Naive thymus-derived CD4-positive, alpha-beta T cell (primary cell): ENCODE measurements at regions of chr1 and their contacts with region 1.

Region 1: DNA sequence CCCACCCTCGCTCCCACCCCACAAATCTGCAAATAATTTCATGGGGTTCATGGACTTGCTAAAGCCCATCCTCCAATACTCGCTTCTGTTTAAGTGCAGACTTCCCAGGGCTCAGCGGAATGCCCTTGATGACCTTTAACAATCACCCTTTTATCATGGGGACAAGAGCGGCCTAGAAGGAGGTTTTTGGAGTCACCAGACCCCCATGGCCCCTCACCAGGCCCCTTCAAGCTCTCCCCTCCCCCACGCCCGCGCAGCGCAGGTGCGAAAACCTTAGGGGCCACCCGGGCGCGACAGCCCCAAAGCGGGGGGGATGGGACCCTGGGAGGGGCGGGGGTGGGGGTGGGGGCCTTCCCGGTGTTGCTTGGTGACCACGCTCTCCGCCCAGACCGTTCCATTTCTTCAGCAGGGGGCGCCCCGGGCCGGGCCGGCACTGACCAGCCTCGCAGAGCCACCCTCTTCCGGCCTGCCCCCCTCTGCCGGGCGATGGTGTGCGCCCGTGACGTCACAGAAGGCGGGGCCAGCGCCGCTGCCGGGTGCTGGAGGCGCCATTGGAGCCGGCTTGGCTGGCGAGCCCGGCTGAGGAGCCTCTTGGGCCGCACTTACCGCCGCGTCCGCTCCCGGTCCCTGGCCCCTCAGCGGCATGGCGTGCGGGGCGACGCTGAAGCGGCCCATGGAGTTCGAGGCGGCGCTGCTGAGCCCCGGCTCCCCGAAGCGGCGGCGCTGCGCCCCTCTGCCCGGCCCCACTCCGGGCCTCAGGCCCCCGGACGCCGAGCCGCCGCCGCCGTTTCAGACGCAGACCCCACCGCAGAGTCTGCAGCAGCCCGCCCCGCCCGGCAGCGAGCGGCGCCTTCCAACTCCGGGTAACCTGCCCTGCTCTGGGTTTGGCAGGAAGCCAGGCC is at the start of gene AKIRIN1:
- DNase-seq: peak; percentile 82 to 100 (median 89)
- ATAC-seq: peak; percentile 98
- H3K4me3 ChIP-seq: peak within 1 kb of the TSS; percentile 82
- H3K4me3 Mint-ChIP-seq: peak within 1 kb of the TSS; percentile 80 to 95 (median 90)
- H3K27ac ChIP-seq: peak within 1 kb of the TSS; percentile 99
- H3K27ac Mint-ChIP-seq: peak within 1 kb of the TSS; percentile 84 to 95 (median 91)
- H3K4me1 ChIP-seq: peaks cover 14 to 32% of the 10 kb centered on the region in 2 donors
- H3K4me1 Mint-ChIP-seq: peaks cover 24 to 52% (median 42%) of the 10 kb centered on the region in 7 donors
- H3K27me3 ChIP-seq: no peaks in the 10 kb centered on the region
- H3K27me3 Mint-ChIP-seq: peaks cover 0 to 4% (median 0%) of the 10 kb centered on the region in 5 donors
- total RNA-seq, gene AKIRIN1: 63.7 to 74.7 (median 70.2) TPM

Region 2: GRCh38 chr1:38919130-38919529 is 71.9 kb before region 1 on chr1:
- CTCF ChIA-PET with region 1: no interaction called
- POLR2A ChIA-PET with region 1: no interaction called
- intact Hi-C with region 1: no loop called
- DNase-seq: no peak
- ATAC-seq: no peak
- H3K4me3 ChIP-seq: no peak overlapping the region
- H3K4me3 Mint-ChIP-seq: no peak overlapping the region
- H3K27ac ChIP-seq: no peak overlapping the region
- H3K27ac Mint-ChIP-seq: no peak overlapping the region
- H3K4me1 ChIP-seq: no peaks in the 10 kb centered on the region
- H3K4me1 Mint-ChIP-seq: peaks cover 0 to 3% (median 0%) of the 10 kb centered on the region in 7 donors
- H3K27me3 ChIP-seq: no peaks in the 10 kb centered on the region
- H3K27me3 Mint-ChIP-seq: no peaks in the 10 kb centered on the region

Region 3: DNA sequence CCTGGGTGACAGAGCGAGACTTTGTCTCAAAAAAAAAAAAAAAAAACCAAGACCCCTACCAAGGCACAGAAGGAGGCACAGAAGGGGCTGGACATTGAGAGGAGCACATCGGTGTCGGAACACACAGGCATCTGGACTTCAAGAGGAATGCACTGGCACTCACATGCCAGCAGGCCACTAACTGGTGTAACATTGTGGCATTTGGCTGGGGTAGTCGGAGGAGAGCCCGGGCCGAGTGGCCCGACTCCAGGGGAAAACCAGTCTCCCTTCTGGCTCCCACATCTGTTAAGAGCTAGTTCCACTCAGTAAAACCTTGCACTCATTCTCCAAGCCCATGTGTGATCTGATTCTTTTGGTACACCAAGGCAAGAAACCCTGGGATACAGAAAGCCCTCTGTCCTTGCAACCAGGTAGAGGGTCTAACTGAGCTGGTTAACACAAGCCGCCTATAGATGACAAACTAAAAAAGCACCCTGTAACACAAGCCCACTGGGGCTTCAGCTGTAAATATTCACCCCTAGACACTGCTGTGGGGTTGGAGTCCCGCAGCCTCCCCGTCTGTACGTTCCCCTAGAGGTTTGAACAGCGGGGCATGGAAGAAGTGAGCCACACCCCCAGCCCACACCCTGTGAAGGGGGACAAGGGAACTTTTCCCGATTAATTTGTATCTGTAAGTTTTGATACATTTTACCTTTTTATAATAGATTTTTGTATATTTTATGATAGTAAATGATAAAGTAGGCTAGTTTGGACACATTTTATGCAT is 17.1 kb before region 1 on chr1:
- CTCF ChIA-PET with region 1: interaction called, 3 read pairs
- POLR2A ChIA-PET with region 1: interaction called, 25 read pairs
- intact Hi-C with region 1: loop called (anchors 1 kb)
- DNase-seq: no peak
- ATAC-seq: no peak
- H3K4me3 ChIP-seq: no peak overlapping the region
- H3K4me3 Mint-ChIP-seq: no peak overlapping the region
- H3K27ac ChIP-seq: no peak overlapping the region
- H3K27ac Mint-ChIP-seq: peak overlapping the region in 1 of 9 donors; percentile 38
- H3K4me1 ChIP-seq: peaks cover 0 to 14% of the 10 kb centered on the region in 2 donors
- H3K4me1 Mint-ChIP-seq: peaks cover 2 to 25% (median 15%) of the 10 kb centered on the region in 7 donors
- H3K27me3 ChIP-seq: no peaks in the 10 kb centered on the region
- H3K27me3 Mint-ChIP-seq: peaks cover 0 to 2% (median 0%) of the 10 kb centered on the region in 5 donors

Region 4: GRCh38 chr1:39003794-39004193 is 12.8 kb after region 1 on chr1:
- CTCF ChIA-PET with region 1: no interaction called
- POLR2A ChIA-PET with region 1: interaction called, 3 read pairs
- intact Hi-C with region 1: loop called in 1 of 2 experiments (anchors 2 kb)
- DNase-seq: no peak
- ATAC-seq: no peak
- H3K4me3 ChIP-seq: no peak overlapping the region
- H3K4me3 Mint-ChIP-seq: no peak overlapping the region
- H3K27ac ChIP-seq: no peak overlapping the region
- H3K27ac Mint-ChIP-seq: peak overlapping the region in 3 of 9 donors; percentile 63 to 80 (median 74)
- H3K4me1 ChIP-seq: no peaks in the 10 kb centered on the region
- H3K4me1 Mint-ChIP-seq: peaks cover 3 to 36% (median 15%) of the 10 kb centered on the region in 7 donors
- H3K27me3 ChIP-seq: no peaks in the 10 kb centered on the region
- H3K27me3 Mint-ChIP-seq: no peaks in the 10 kb centered on the region

Region 5: GRCh38 chr1:39026051-39026865 is 35.3 kb after region 1 on chr1 and contains the start of gene NDUFS5:
- CTCF ChIA-PET with region 1: no interaction called
- POLR2A ChIA-PET with region 1: interaction called, 11 read pairs
- intact Hi-C with region 1: loop called (anchors 1 kb)
- DNase-seq: peak; percentile 53 to 84 (median 80)
- ATAC-seq: peak; percentile 96
- H3K4me3 ChIP-seq: peak within 1 kb of the TSS; percentile 93
- H3K4me3 Mint-ChIP-seq: peak within 1 kb of the TSS; percentile 90 to 100 (median 96)
- H3K27ac ChIP-seq: peak within 1 kb of the TSS; percentile 94
- H3K27ac Mint-ChIP-seq: peak within 1 kb of the TSS; percentile 93 to 99 (median 97)
- H3K4me1 ChIP-seq: peaks cover 18% of the 10 kb centered on the region in 2 donors
- H3K4me1 Mint-ChIP-seq: peaks cover 19 to 37% (median 28%) of the 10 kb centered on the region in 7 donors
- H3K27me3 ChIP-seq: no peaks in the 10 kb centered on the region
- H3K27me3 Mint-ChIP-seq: peaks cover 0 to 6% (median 0%) of the 10 kb centered on the region in 5 donors
- total RNA-seq, gene NDUFS5: 95.1 to 128 (median 115) TPM

Region 6: DNA sequence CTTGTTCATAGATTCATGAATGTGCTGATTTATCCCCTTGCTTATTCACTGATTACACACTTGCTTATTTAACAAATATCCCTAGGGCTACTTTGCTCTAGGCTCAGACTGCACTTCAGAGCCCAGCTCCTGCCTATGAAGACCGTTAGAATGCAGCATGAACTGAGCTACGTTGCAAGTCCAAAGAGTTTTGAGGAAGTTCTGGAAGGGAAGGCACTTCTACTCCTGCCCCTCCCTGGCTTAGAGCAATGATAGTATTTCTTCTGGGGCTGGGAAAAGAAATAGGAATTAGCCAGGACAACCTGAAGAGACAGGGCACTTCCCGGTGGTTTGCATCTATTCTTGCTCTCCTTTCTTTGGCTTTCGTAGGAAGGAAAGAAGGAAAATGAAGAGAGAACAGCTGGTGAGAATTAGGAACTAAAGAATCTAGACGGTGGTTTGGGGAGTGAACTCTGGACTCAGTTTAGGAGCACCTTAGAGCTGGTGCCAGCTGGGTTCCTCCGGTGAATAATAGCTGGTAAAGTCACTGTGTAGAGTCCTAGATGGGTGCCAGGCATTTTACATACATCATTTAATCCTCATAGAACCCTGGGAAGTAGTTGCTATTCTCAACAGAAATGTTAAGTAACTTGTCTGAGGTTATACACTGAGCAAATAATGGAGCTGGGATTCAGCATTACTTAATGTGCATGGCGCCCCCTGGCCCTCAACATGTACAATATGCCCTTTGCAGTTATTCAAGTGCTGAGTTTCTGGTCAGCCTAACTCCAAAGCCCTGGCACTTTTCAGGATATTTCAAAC is 101.1 kb after region 1 on chr1:
- CTCF ChIA-PET with region 1: interaction called, 8 read pairs
- POLR2A ChIA-PET with region 1: interaction called, 3 read pairs
- intact Hi-C with region 1: loop called in 1 of 2 experiments (anchors 1 kb)
- DNase-seq: peak in 8 of 9 donors; percentile 33 to 61 (median 46)
- ATAC-seq: peak; percentile 82
- H3K4me3 ChIP-seq: no peak overlapping the region
- H3K4me3 Mint-ChIP-seq: peak overlapping the region in 1 of 10 donors; percentile 51
- H3K27ac ChIP-seq: no peak overlapping the region
- H3K27ac Mint-ChIP-seq: no peak overlapping the region
- H3K4me1 ChIP-seq: no peaks in the 10 kb centered on the region
- H3K4me1 Mint-ChIP-seq: peaks cover 4 to 11% (median 5%) of the 10 kb centered on the region in 7 donors
- H3K27me3 ChIP-seq: no peaks in the 10 kb centered on the region
- H3K27me3 Mint-ChIP-seq: peaks cover 0 to 5% (median 3%) of the 10 kb centered on the region in 5 donors

Region 7: GRCh38 chr1:40630488-40631381 is 1639.7 kb after region 1 on chr1:
- CTCF ChIA-PET with region 1: no interaction called
- POLR2A ChIA-PET with region 1: no interaction called
- intact Hi-C with region 1: no loop called
- DNase-seq: no peak
- ATAC-seq: no peak
- H3K4me3 ChIP-seq: no peak overlapping the region
- H3K4me3 Mint-ChIP-seq: no peak overlapping the region
- H3K27ac ChIP-seq: no peak overlapping the region
- H3K27ac Mint-ChIP-seq: peak overlapping the region in 1 of 9 donors; percentile 62
- H3K4me1 ChIP-seq: peaks cover 0 to 21% of the 10 kb centered on the region in 2 donors
- H3K4me1 Mint-ChIP-seq: peaks cover 0 to 30% (median 9%) of the 10 kb centered on the region in 7 donors
- H3K27me3 ChIP-seq: no peaks in the 10 kb centered on the region
- H3K27me3 Mint-ChIP-seq: no peaks in the 10 kb centered on the region